SK-MEL-5 (cell line): ENCODE measurements at regions of chr3 and their contacts with region 1.

Region 1: DNA sequence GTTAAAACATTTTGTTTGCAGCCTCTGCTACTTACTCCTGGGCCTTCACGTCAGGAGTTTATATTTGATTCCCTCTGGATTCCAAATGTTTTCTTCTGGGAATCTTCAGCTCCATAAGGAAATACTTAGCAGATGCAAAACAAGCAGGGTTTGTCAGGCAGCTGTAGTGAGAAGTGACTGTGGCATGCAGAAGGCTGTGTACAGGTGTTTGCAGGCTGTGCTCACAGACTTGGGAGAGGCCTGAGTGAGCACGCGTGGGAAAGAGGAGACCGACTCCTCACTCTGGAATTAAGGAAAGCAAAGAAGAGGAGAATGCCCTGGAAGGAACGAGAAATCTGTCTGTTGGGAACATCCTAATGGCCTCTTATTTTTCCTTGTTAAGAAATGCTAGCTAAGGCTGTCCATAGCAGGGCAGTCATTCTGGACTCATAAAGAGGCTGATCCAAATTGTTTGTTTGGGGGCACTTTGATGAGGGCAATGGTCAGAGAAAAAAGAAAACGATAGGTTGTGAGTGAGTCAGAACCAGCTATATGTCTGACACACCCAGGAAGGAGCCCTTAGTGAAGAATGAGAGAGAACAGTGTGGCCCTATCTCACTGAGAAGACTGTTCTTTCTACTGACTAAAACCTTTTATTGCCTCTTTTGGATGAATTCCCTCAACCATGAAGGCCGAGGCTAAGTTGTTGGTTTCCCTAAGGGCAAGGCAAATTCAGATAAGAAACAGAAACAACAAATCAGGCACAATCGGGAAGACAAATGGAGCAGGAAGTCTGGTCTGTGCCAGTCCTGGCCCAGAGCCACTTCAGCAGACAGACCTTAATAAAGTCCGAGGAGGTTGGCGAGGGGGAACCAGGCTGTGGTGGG is 82.6 kb downstream of the TGFBR2 start:
- DNase-seq: peak; percentile 84

Region 2: DNA sequence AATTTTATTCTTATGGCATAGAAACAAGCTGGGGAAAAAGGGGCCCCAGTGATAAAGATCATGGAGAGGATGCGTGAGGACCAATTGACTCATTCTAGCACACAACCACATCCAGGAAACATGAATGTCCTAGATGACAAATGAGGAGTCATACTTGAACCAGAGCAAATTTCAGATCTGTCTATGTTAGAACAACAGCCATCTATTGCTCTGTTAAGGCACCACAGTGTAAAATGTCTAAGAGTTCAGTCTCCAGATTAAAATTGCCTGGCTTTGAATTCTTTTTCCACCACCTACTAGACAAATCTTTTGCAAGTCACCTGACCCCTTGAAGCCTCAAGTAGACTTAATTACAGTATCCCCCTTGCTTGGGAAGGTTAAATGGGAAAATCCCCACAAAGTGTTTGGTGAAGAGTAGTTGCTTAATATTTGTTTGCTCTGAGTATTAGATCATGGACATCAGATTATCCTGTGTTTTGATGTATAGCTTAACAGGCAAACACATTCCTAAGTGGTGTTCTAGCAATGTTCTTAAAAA is 341.3 kb before region 1 on chr3:
- in situ Hi-C with region 1: loop called (anchors 10 kb)
- DNase-seq: no peak

Region 3: GRCh38 chr3:31423482-31423881 is 734.5 kb after region 1 on chr3:
- in situ Hi-C with region 1: no loop called
- DNase-seq: peak; percentile 91